ENCODE measurements at regions of chr16 and their contacts with region 1.

Region 1: DNA sequence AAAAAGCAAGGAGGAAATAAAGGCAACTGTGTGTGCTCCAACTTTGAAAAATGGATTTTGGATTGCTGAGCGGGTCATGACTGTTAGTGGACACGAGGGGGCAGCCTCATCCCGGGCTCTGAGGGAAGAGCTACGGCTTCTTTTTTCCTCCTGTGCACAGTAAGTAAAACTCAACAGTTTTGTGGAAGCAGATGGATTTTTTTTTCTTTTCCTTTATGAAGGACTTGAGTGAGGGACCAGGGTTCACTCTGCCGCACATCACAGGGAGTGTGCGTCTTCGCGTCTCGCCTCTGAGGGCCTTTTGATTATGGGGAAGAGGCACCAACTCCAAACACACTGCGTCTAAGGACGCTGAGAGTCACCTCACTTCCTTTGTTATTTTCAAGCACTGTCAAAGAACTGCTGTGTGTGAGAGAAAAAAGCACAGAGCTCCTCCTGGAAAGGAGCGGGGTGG is 80.3 kb upstream of the GOT2 start:
- DNase-seq: peak; percentile 2
- H3K4me3 ChIP-seq: no peak overlapping the region; the same call in 1 of the 2 replicates
- H3K27ac ChIP-seq: no peak overlapping the region
- H3K27me3 ChIP-seq: no peaks in the 10 kb centered on the region
- CTCF ChIP-seq: peak; percentile 91

Region 2: GRCh38 chr16:58767581-58767980 is 46.8 kb before region 1 on chr16:
- CTCF ChIA-PET with region 1: no interaction called
- POLR2A ChIA-PET with region 1: no interaction called
- DNase-seq: no peak
- H3K4me3 ChIP-seq: no peak overlapping the region
- H3K27ac ChIP-seq: no peak overlapping the region
- H3K27me3 ChIP-seq: no peaks in the 10 kb centered on the region
- CTCF ChIP-seq: no peak

Region 3: GRCh38 chr16:58792188-58792587 is 22.2 kb before region 1 on chr16:
- CTCF ChIA-PET with region 1: interaction called, 11 read pairs
- POLR2A ChIA-PET with region 1: no interaction called
- DNase-seq: no peak
- H3K4me3 ChIP-seq: no peak overlapping the region
- H3K27ac ChIP-seq: no peak overlapping the region
- H3K27me3 ChIP-seq: no peaks in the 10 kb centered on the region
- CTCF ChIP-seq: no peak

Region 4: DNA sequence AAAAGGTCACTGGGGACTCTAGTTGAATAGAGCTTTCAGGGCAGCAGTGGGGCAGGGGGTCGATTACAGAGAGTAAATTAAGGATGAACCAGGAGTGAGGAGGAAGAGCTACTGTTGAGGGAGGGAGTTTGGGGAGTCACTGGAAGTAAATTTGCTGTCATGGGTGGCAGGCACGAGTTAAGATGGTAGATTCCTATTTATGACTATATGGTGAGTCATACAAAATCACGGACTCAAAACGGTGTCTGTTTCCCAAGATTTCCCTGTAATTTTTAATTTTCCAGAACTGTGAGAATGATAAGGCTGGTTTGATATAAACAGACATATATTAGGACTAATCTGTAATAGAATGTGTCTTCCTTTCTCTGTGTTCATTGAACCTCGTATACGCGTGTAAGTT is 207.4 kb after region 1 on chr16:
- CTCF ChIA-PET with region 1: no interaction called
- POLR2A ChIA-PET with region 1: no interaction called
- DNase-seq: no peak
- H3K4me3 ChIP-seq: no peak overlapping the region
- H3K27ac ChIP-seq: no peak overlapping the region
- H3K27me3 ChIP-seq: no peaks in the 10 kb centered on the region
- CTCF ChIP-seq: no peak